HEK293 (cell line): ENCODE measurements at regions of chr7 and their contacts with region 1.

Region 1: GRCh38 chr7:106270122-106270977 is 14.4 kb downstream of the NAMPT start:
- H3K4me3 ChIP-seq: no peak overlapping the region
- H3K27ac ChIP-seq: no peak overlapping the region
- H3K4me1 ChIP-seq: no peaks in the 10 kb centered on the region
- CTCF ChIP-seq: no peak

Region 2: GRCh38 chr7:105830391-105831301 is 439.7 kb before region 1 on chr7:
- CTCF ChIA-PET with region 1: no interaction called
- POLR2A ChIA-PET with region 1: no interaction called
- H3K4me3 ChIP-seq: no peak overlapping the region
- H3K27ac ChIP-seq: no peak overlapping the region
- H3K4me1 ChIP-seq: peaks cover 5% of the 10 kb centered on the region; the same call in 1 of the 2 replicates
- CTCF ChIP-seq: no peak

Region 3: DNA sequence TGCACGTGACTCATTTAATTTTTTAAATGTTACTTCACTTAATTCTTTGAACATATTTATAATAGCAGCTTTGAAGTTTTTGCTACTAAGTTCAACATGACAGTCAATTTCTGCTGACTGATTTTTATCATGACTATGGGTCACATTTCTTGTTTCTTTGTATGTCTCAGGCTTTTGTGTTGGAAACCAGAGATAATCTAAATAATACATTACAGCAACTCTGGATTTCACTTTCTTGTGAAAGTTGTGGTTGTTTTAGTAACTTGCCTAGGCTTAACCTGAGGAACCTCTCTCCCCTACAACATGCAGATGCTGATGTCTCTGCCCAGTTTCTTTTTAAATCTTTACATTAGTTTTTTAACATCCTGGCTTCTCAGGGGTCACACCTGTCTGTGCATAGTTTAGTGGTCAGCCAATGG is 209.8 kb after region 1 on chr7:
- CTCF ChIA-PET with region 1: interaction called, 10 read pairs
- POLR2A ChIA-PET with region 1: no interaction called
- H3K4me3 ChIP-seq: no peak overlapping the region
- H3K27ac ChIP-seq: no peak overlapping the region
- H3K4me1 ChIP-seq: no peaks in the 10 kb centered on the region
- CTCF ChIP-seq: no peak